ENCODE measurements at regions of chr6 and their contacts with region 1.

Region 1: DNA sequence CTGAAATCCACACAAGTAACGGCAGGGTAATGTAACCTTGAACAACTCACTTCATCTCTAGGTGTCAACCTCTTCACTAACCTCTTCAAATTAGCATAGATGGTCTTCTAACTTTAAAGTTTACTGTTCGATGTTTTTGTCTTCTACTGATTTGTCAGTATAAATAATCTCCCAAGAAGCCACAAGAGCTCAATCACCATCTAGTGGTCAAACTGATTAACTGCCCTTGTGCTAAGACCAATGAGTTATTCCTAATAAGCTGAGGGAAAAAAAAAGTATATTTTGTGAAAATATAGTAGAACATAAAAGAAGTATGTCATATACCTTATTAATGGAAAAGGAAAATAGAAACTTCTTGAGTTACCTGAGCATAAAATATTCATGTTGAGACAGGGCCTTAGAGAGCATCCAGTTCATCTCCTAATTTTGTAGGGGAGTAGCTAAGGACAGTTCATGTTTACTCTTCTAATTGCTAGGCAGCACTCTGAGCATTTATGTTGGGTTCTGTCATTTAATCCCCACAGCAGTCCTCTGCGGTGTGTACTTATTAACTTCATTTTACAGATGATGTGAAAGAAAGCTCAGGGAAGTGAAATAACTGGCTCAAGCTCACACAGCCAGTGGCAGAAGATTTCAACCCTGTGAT is 317.1 kb downstream of the ESR1 start:
- DNase-seq: no peak
- ATAC-seq: peak in 6 of 8 donors; percentile 31 to 60 (median 49)
- H3K4me3 ChIP-seq: no peak overlapping the region
- H3K27ac ChIP-seq: peak overlapping the region in 1 of 10 donors; percentile 16
- H3K4me1 ChIP-seq: peaks cover 0 to 45% (median 27%) of the 10 kb centered on the region in 9 donors
- H3K27me3 ChIP-seq: no peaks in the 10 kb centered on the region
- CTCF ChIP-seq: peak; percentile 49 to 84 (median 77)

Region 2: GRCh38 chr6:151440930-151441329 is 683.6 kb before region 1 on chr6:
- intact Hi-C with region 1: loop called in 1 of 10 experiments (anchors 10 kb)
- DNase-seq: no peak
- ATAC-seq: no peak
- H3K4me3 ChIP-seq: peak overlapping the region in 1 of 10 donors; percentile 5
- H3K27ac ChIP-seq: peak overlapping the region in 3 of 10 donors; percentile 42 to 44 (median 43)
- H3K4me1 ChIP-seq: peaks cover 4 to 77% (median 37%) of the 10 kb centered on the region in 9 donors
- H3K27me3 ChIP-seq: no peaks in the 10 kb centered on the region
- CTCF ChIP-seq: peak in 8 of 9 donors; percentile 8 to 65 (median 52)

Region 3: DNA sequence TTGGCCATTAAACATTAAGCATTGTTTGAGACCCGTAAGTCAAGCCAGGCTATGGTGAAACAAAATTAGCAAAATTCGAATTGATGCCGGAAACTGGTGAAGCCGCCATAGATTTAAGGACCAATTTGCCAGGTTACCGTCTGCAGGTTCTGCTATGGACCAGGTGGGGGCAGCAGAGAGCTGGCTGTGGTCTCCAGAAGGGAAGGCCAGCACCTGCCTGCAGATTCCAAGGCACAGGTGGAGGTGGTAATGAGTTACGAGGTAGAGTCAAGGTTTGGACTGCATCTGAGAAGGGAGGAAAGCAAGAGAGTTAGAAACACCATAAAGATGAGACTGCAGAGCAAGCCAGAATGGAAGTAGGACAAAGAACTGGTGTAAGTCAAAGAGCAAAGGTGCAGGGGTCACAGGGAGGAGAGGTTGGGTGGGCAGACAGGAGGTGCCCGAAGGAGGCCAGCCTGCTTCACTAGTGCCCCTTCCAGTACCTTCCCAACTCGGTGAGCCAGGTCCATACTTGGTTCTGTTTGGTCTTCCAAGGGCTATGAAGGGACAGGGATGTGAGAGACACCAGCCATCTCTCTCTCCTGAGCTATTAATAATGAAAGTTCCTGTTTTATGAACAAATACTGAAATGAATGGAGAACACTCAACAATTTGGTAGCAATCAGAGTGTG is 448.7 kb before region 1 on chr6:
- intact Hi-C with region 1: loop called in 2 of 10 experiments (anchors 5 to 10 kb)
- DNase-seq: no peak
- ATAC-seq: peak in 2 of 8 donors; percentile 40
- H3K4me3 ChIP-seq: no peak overlapping the region
- H3K27ac ChIP-seq: no peak overlapping the region
- H3K4me1 ChIP-seq: peaks cover 0 to 12% (median 0%) of the 10 kb centered on the region in 9 donors
- H3K27me3 ChIP-seq: no peaks in the 10 kb centered on the region
- CTCF ChIP-seq: peak; percentile 62 to 86 (median 73)

Region 4: DNA sequence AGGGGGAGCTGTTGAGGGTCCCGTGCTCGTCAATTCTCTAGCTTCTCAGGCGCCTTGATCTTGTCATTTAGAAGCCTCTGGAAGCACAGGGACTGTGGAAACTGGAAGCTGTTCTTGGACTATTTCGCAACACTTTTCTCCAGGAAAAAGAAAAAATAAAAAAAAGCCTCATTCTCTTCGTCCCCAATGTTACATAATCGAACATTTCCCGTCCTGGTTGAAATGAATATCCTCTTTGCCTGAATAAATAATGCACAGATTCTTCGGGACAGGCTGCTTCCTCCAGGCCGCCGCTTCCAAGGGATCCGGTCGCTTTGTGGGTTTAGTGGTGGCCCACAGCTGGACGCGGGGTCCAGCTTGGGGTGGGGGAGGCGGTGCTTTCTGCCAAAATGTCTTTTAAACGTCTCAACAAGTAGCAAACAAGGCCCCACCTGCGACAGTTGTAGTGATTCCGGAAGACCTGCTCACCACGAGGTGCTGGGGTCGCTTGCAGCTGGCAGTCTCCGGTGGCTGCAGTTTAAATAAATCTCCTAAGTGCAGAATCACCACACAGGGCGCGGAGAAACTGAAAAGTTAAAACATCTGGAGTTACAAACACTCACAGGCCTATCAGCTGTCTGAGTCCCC is 443.0 kb before region 1 on chr6:
- intact Hi-C with region 1: loop called in 3 of 10 experiments (anchors 5 to 10 kb)
- DNase-seq: peak in 1 of 2 donors; percentile 18
- ATAC-seq: peak in 7 of 8 donors; percentile 30 to 67 (median 57)
- H3K4me3 ChIP-seq: peak overlapping the region in 6 of 10 donors; percentile 13 to 32 (median 24)
- H3K27ac ChIP-seq: peak overlapping the region in 9 of 10 donors; percentile 31 to 80 (median 54)
- H3K4me1 ChIP-seq: peaks cover 0 to 17% (median 0%) of the 10 kb centered on the region in 9 donors
- H3K27me3 ChIP-seq: peaks cover 0 to 8% (median 0%) of the 10 kb centered on the region in 7 donors
- CTCF ChIP-seq: no peak

Region 5: DNA sequence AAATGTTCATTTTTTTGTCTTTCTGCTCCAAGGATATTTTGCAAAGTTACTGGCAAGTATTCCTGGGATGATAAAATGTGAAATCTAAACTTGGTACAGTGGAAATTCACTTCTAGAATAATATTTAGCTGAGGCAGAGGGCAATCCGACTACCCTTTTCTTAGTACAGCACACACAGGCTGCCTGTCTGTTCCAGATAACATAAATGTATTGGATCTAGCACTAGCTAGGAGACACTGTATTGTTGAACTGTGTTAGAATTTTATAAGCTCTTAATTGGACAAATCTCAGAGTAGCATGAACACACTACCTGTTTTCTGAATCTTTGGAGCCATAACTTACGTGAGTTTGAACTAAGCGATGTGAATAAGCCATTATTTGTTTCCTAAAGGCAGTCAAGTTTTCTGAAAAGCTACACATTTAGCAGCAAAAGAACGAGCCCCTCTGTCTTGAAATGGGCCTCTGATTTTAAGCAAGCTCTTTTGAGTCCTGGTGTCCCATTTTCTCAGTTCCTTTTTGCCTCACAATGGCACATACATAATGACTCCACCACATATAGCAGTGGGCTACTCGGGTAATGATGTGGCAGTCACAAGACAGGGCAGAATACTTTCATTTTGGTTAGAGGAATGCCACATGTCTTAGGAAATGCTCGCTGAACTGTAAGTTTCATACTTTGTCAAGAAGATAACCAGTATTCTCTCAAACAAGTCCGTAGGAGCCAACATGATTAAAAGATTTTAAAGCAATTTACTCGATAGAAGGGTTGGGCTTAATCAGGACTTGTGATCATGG is 433.6 kb before region 1 on chr6:
- intact Hi-C with region 1: loop called in 4 of 10 experiments (anchors 5 to 10 kb)
- DNase-seq: no peak
- ATAC-seq: peak in 7 of 8 donors; percentile 64 to 78 (median 72)
- H3K4me3 ChIP-seq: peak overlapping the region in 9 of 10 donors; percentile 10 to 47 (median 41)
- H3K27ac ChIP-seq: peak overlapping the region; percentile 18 to 82 (median 69)
- H3K4me1 ChIP-seq: peaks cover 0 to 27% (median 0%) of the 10 kb centered on the region in 9 donors
- H3K27me3 ChIP-seq: peaks cover 0 to 2% (median 0%) of the 10 kb centered on the region in 7 donors
- CTCF ChIP-seq: no peak

Region 6: GRCh38 chr6:151765444-151765886 is 359.1 kb before region 1 on chr6:
- intact Hi-C with region 1: loop called (anchors 1 to 10 kb)
- DNase-seq: peak in 1 of 2 donors; percentile 70
- ATAC-seq: peak; percentile 30 to 73 (median 48)
- H3K4me3 ChIP-seq: no peak overlapping the region
- H3K27ac ChIP-seq: no peak overlapping the region
- H3K4me1 ChIP-seq: peaks cover 0 to 22% (median 8%) of the 10 kb centered on the region in 9 donors
- H3K27me3 ChIP-seq: no peaks in the 10 kb centered on the region
- CTCF ChIP-seq: peak; percentile 57 to 85 (median 75)

Region 7: DNA sequence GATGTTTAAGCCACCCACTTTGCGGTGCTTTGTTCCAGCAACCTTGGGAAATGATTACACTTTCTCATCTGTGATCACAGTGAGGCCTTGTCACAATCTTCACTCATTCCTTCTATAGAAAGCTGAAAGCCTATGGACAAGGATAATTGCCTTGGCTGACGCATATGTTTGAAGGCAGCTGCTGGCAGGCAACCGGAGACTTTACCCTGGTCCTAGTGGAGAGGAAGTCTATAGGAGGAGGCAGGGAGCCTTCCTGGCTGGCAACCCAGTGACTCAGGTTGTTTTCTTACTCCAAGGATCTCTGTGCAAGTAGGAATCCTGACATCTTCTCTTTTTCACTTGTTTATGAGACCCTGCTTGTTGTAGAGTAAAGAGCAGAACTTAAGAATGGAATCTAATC is 351.2 kb before region 1 on chr6:
- intact Hi-C with region 1: loop called in 6 of 10 experiments (anchors 5 to 10 kb)
- DNase-seq: no peak
- ATAC-seq: no peak
- H3K4me3 ChIP-seq: no peak overlapping the region
- H3K27ac ChIP-seq: no peak overlapping the region
- H3K4me1 ChIP-seq: no peaks in the 10 kb centered on the region
- H3K27me3 ChIP-seq: no peaks in the 10 kb centered on the region
- CTCF ChIP-seq: no peak